CD4-positive, alpha-beta memory T cell (primary cell): ENCODE measurements at regions of chr16 and their contacts with region 1.

Region 1: GRCh38 chr16:75464130-75464918 is at the start of gene TMEM170A:
- DNase-seq: peak; percentile 97 to 99 (median 98)
- H3K4me3 ChIP-seq: peak within 1 kb of the TSS; percentile 47 to 91
- H3K4me3 Mint-ChIP-seq: peak within 1 kb of the TSS; percentile 91 to 98 (median 95)
- H3K27ac ChIP-seq: peak within 1 kb of the TSS; percentile 90
- H3K27ac Mint-ChIP-seq: peak within 1 kb of the TSS; percentile 88 to 98 (median 97)
- H3K4me1 ChIP-seq: peaks cover 40% of the 10 kb centered on the region
- H3K4me1 Mint-ChIP-seq: peaks cover 33 to 50% (median 42%) of the 10 kb centered on the region in 4 donors
- H3K27me3 ChIP-seq: no peaks in the 10 kb centered on the region
- H3K27me3 Mint-ChIP-seq: no peaks in the 10 kb centered on the region
- total RNA-seq, gene TMEM170A: 50.7 to 54.3 TPM

Region 2: DNA sequence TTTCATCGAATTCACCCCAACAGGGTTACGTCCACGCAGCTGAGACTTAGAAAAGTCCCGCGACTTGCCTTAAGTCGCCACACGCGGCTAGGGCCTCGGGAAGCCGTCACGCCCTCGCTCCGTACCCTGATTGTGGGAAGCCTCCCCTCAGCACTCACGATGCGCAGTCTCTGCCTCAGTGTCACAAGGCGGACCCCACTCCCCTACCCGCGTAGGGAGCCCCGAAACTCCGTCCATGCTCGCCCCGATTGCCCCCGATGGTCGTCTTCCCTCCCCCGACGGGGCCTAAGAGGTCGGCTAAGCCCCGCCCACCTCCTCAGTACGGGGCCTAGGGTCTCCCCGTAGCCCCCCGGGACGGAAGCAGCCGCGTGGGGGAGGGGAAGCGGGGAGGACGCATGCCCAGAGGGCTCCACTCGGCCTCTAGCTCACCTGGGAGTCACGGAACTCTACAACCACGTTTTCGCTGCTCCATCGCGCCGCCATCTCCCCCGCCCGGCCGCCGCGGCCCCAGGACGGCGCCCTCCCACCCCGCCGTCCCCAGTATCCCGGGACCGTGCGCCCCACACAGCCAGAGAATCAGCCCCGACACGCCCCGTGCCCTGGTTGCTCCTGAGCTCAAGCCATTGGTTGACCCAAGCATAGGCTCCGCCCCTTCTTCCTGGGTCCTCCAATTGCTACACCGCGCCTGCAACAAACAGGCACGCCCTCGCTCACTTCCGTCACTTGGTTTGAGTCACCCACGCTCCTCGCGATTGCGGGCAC is 479.6 kb before region 1 on chr16 and contains the start of gene WDR59:
- CTCF ChIA-PET with region 1: no interaction called
- POLR2A ChIA-PET with region 1: no interaction called
- intact Hi-C with region 1: loop called (anchors 1 kb)
- DNase-seq: peak; percentile 97 to 100 (median 99)
- H3K4me3 ChIP-seq: peak within 1 kb of the TSS; percentile 90 to 96
- H3K4me3 Mint-ChIP-seq: peak within 1 kb of the TSS; percentile 93 to 98 (median 96)
- H3K27ac ChIP-seq: peak within 1 kb of the TSS; percentile 87
- H3K27ac Mint-ChIP-seq: peak within 1 kb of the TSS; percentile 84 to 99 (median 95)
- H3K4me1 ChIP-seq: peaks cover 18% of the 10 kb centered on the region
- H3K4me1 Mint-ChIP-seq: peaks cover 8 to 29% (median 19%) of the 10 kb centered on the region in 4 donors
- H3K27me3 ChIP-seq: no peaks in the 10 kb centered on the region
- H3K27me3 Mint-ChIP-seq: no peaks in the 10 kb centered on the region
- total RNA-seq, gene WDR59: 116 to 127 TPM

Region 3: DNA sequence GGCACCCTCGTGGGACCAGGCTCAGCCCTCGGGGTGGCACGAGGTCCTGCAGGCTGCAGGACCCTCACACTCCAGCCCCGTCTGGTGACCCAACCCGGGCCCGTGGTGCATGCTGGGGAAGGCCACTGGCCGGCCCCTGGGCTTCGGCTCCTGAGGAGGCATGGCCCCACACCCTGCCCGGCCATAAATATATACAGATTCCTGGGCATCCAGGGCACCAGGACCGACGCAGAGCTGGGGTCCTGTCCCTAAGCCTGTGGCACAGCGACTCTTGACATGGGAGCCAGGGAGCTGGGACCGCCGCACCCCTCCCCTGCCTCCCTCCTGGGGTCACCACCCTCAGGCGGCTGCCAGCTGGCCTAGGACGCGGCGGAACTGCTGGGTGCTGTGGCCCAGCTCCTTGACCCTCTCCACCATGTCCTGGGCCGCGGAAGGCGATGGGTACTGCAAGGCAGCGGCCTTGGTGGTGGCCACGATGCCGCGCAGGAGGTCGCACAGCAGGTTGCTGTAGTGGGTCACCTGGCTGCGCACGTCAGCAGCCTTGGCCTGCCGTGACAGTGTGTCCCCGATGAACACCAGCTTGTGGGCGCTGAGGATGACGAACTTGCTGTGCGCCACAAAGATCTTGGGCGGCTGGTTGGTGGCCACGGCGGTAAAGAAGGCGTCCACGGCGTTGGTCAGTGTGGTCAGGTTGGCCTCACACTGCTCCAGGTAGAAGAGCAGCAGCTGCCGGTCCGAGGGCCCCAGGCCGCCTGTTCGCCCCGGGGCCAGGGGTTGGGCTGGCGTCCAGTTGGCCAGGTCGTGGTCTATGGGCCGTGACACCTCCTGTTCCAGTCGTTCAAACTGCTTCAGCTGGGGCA is 234.9 kb before region 1 on chr16:
- CTCF ChIA-PET with region 1: interaction called, 10 read pairs
- POLR2A ChIA-PET with region 1: no interaction called
- intact Hi-C with region 1: loop called (anchors 1 kb)
- DNase-seq: no peak
- H3K4me3 ChIP-seq: no peak overlapping the region
- H3K4me3 Mint-ChIP-seq: no peak overlapping the region
- H3K27ac ChIP-seq: no peak overlapping the region
- H3K27ac Mint-ChIP-seq: no peak overlapping the region
- H3K4me1 ChIP-seq: peaks cover 6% of the 10 kb centered on the region
- H3K4me1 Mint-ChIP-seq: peaks cover 0 to 5% (median under 1%) of the 10 kb centered on the region in 4 donors
- H3K27me3 ChIP-seq: no peaks in the 10 kb centered on the region
- H3K27me3 Mint-ChIP-seq: peaks cover 0 to 1% of the 10 kb centered on the region in 2 donors

Region 4: GRCh38 chr16:75432828-75433731 is 31.2 kb before region 1 on chr16 and contains the start of gene CFDP1:
- CTCF ChIA-PET with region 1: interaction called, 56 read pairs
- POLR2A ChIA-PET with region 1: interaction called, 56 read pairs
- intact Hi-C with region 1: loop called (anchors 1 kb)
- DNase-seq: peak; percentile 96 to 98 (median 97)
- H3K4me3 ChIP-seq: peak within 1 kb of the TSS; percentile 61 to 90
- H3K4me3 Mint-ChIP-seq: peak within 1 kb of the TSS; percentile 89 to 95 (median 94)
- H3K27ac ChIP-seq: peak within 1 kb of the TSS; percentile 96
- H3K27ac Mint-ChIP-seq: peak within 1 kb of the TSS; percentile 92 to 98 (median 97)
- H3K4me1 ChIP-seq: peaks cover 30% of the 10 kb centered on the region
- H3K4me1 Mint-ChIP-seq: peaks cover 16 to 56% (median 43%) of the 10 kb centered on the region in 4 donors
- H3K27me3 ChIP-seq: no peaks in the 10 kb centered on the region
- H3K27me3 Mint-ChIP-seq: no peaks in the 10 kb centered on the region
- total RNA-seq, gene CFDP1: 41.8 to 42.4 TPM

Region 5: DNA sequence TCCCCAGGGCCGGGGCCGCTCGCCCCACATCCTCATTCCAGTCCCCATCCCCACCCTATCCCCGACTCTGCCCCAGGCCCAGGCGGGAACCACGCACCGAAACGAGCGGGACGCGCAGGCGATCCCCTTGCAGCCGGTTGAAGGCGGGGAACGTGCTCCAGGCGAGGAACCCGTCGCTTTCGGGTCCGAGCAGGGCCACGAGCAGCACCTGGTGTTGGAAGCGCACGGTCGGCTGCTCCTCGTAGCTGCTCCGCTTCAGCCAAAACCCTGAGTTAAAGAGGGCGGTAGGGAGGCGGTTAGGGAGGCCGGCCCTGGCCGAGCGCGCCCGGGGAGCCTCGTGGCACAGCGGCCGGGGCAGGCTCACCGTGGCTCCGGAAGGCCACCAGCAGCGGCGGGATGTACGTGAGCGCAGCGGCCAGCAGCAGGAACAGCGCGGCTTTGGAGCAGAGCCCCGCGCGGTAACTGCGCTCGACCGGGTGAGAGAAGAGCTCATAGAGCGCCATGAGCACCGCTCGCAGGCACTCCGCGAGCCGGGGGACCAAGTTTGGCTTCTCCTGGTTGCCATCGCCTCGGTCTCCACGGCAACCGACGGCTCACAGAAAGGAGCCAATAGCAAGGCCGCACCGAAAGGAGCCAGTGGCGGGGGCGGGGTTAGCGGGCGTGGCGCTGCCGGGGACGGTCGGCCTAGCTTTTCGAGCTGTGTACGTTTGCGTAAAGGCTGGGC is 91.5 kb after region 1 on chr16 and contains the start of gene TMEM231:
- CTCF ChIA-PET with region 1: interaction called, 5 read pairs
- POLR2A ChIA-PET with region 1: interaction called, 3 read pairs
- intact Hi-C with region 1: loop called (anchors 2 kb)
- DNase-seq: peak; percentile 94 to 98 (median 96)
- H3K4me3 ChIP-seq: peak within 1 kb of the TSS; percentile 75 to 76
- H3K4me3 Mint-ChIP-seq: peak within 1 kb of the TSS; percentile 87 to 95 (median 90)
- H3K27ac ChIP-seq: peak within 1 kb of the TSS; percentile 68
- H3K27ac Mint-ChIP-seq: peak within 1 kb of the TSS; percentile 89 to 98 (median 95)
- H3K4me1 ChIP-seq: peaks cover 15% of the 10 kb centered on the region
- H3K4me1 Mint-ChIP-seq: peaks cover 3 to 16% (median 10%) of the 10 kb centered on the region in 4 donors
- H3K27me3 ChIP-seq: no peaks in the 10 kb centered on the region
- H3K27me3 Mint-ChIP-seq: peaks cover 0 to 1% of the 10 kb centered on the region in 2 donors
- total RNA-seq, gene TMEM231: 2.4 to 2.6 TPM

Region 6: GRCh38 chr16:75647492-75648264 is 183.4 kb after region 1 on chr16 and contains the starts of genes KARS1 and TERF2IP:
- CTCF ChIA-PET with region 1: interaction called, 9 read pairs
- POLR2A ChIA-PET with region 1: interaction called, 25 read pairs
- intact Hi-C with region 1: loop called (anchors 1 kb)
- DNase-seq: peak; percentile 94 to 96 (median 95)
- H3K4me3 ChIP-seq: peak within 1 kb of the TSS; percentile 79 to 99
- H3K4me3 Mint-ChIP-seq: peak within 1 kb of the TSS; percentile 94 to 100 (median 99)
- H3K27ac ChIP-seq: peak within 1 kb of the TSS; percentile 98
- H3K27ac Mint-ChIP-seq: peak within 1 kb of the TSS; percentile 95 to 99 (median 99)
- H3K4me1 ChIP-seq: peaks cover 71% of the 10 kb centered on the region
- H3K4me1 Mint-ChIP-seq: peaks cover 44 to 73% (median 59%) of the 10 kb centered on the region in 4 donors
- H3K27me3 ChIP-seq: no peaks in the 10 kb centered on the region
- H3K27me3 Mint-ChIP-seq: no peaks in the 10 kb centered on the region
- total RNA-seq, gene KARS1: 120 to 124 TPM
- total RNA-seq, gene TERF2IP: 98.4 to 108 TPM

Region 7: DNA sequence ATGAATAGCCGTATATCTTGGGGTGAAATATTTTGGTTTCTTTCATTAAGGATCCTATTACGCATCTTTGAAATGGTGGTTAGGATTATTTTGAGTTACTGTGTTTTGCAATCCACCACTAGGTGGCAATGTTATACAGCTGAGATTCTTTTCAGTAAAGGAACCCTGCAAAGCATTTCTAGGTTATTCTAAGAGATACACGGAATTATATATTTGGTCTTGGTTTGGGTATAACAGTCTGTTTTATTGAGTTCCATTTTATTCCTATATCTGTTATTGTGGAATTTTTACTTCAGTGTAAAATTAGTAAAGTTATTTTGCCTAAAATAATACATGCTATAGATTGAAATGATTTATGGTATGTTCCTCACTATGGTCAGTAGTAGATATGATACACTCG is 324.9 kb after region 1 on chr16:
- CTCF ChIA-PET with region 1: no interaction called
- POLR2A ChIA-PET with region 1: no interaction called
- intact Hi-C with region 1: no loop called
- DNase-seq: peak in 4 of 5 donors; percentile 33 to 40 (median 36)
- H3K4me3 ChIP-seq: no peak overlapping the region
- H3K4me3 Mint-ChIP-seq: peak overlapping the region in 1 of 8 donors; percentile 33
- H3K27ac ChIP-seq: no peak overlapping the region
- H3K27ac Mint-ChIP-seq: no peak overlapping the region
- H3K4me1 ChIP-seq: no peaks in the 10 kb centered on the region
- H3K4me1 Mint-ChIP-seq: no peaks in the 10 kb centered on the region
- H3K27me3 ChIP-seq: no peaks in the 10 kb centered on the region
- H3K27me3 Mint-ChIP-seq: peaks cover 12 to 18% of the 10 kb centered on the region in 2 donors